Activated T-helper 1 cell treated with anti-CD3 and anti-CD28 coated beads, Interleukin-12 subunit alpha, Interleukin-12 subunit beta, Interleukin-2, Interleukin-4 antibody, amounts not matched to agents 30 ng/mL and 10 ng/mL and 1 ng/mL, durations not matched to agents 14 hours and 24 hours and 36 hours (primary cell): ENCODE measurements at regions of chr1 and their contacts with region 1.

Region 1: DNA sequence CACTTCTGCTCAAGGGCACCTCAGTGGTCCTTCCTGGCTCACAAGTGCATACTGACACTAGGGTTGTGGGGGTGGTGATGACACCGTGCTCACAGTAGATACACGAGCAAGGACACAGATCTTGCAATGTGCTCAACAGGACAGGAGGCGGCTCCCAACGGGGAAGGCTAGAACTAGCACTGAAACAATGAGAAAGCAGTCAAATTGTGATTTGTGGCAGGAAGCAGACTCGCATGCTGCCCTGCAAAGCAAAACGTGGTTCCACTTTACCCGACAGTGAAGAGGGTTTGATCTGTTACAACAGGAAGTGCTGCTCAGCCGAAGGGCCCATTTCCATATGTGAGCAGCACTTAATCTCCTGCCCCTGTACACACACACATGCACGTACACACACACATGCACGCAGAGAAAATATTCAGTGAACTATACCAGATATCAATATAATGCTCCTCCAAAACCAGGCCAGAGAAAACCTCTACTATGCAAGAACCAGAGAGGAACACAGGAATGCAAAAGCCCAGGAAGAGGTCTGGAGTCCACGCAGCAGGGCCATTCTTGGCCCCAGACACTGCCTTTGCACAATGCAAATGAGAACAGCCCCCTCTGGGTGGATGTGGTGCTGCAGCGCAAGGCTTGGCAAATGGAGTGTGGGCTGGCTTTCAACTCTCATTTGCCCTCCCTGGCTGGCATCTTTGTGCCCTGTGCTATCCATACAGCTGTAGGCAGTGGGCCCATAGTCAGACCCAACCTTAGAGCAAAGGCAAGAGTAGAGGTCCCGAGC is 47.1 kb downstream of the KANK4 start:
- DNase-seq: peak; percentile 46
- H3K4me3 Mint-ChIP-seq: peak overlapping the region; percentile 25
- H3K27ac Mint-ChIP-seq: peak overlapping the region; percentile 81
- H3K4me1 Mint-ChIP-seq: peaks cover 18% of the 10 kb centered on the region
- H3K27me3 Mint-ChIP-seq: no peaks in the 10 kb centered on the region

Region 2: DNA sequence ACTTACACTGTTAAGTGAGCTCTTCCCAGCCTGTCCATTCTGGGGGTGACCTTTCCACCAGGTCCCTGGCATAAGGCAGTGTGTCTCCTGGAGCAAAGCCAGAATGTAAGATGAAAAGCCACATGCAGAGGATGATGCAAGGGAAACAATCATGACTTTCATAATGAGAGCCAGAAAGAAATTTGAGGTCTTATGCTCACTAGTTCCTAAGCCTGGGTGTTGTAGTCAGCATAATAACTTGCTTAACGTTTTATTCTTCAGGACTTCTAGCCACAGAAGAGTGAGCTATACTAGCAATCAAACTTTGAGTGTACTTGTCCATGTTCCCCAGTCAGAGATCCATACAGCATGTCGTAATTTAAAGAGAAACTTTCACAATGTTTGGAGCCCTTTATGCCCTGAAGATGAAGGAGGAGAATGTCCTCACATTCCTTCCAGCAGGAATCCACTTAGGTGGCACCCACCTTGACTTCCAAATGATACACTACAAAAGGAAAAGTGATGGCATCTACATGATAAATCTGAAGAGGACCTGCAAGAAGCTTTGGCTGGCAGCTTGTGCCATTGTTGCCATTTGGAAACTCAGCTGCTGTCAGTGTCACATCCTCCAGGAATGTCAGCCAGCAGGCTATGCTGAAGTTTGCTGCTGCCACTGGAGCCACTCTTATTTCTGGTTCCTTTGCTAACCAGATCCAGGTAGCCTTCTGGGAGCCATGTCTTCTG is 989.8 kb after region 1 on chr1:
- intact Hi-C with region 1: loop called (anchors 10 kb)
- DNase-seq: no peak
- H3K4me3 Mint-ChIP-seq: no peak overlapping the region
- H3K27ac Mint-ChIP-seq: no peak overlapping the region
- H3K4me1 Mint-ChIP-seq: no peaks in the 10 kb centered on the region
- H3K27me3 Mint-ChIP-seq: peaks cover 2% of the 10 kb centered on the region